PC-9 (cell line): ENCODE measurements at regions of chr2 and their contacts with region 1.

Region 1: GRCh38 chr2:178891265-178891958 is 84.2 kb upstream of the TTN start:
- DNase-seq: peak; percentile 61 to 67
- H3K4me3 ChIP-seq: no peak overlapping the region
- H3K27ac ChIP-seq: no peak overlapping the region
- H3K4me1 ChIP-seq: no peaks in the 10 kb centered on the region
- H3K27me3 ChIP-seq: no peaks in the 10 kb centered on the region
- CTCF ChIP-seq: peak; percentile 100

Region 2: GRCh38 chr2:178859730-178860129 is 31.7 kb before region 1 on chr2:
- CTCF ChIA-PET with region 1: no interaction called
- POLR2A ChIA-PET with region 1: no interaction called
- intact Hi-C with region 1: no loop called
- DNase-seq: no peak
- H3K4me3 ChIP-seq: no peak overlapping the region
- H3K27ac ChIP-seq: no peak overlapping the region
- H3K4me1 ChIP-seq: peaks cover 13% of the 10 kb centered on the region
- H3K27me3 ChIP-seq: no peaks in the 10 kb centered on the region
- CTCF ChIP-seq: no peak

Region 3: GRCh38 chr2:179106676-179107428 is 215.4 kb after region 1 on chr2:
- CTCF ChIA-PET with region 1: no interaction called
- POLR2A ChIA-PET with region 1: no interaction called
- intact Hi-C with region 1: loop called (anchors 1 kb)
- DNase-seq: peak; percentile 63 to 91
- H3K4me3 ChIP-seq: no peak overlapping the region
- H3K27ac ChIP-seq: no peak overlapping the region
- H3K4me1 ChIP-seq: peaks cover 18% of the 10 kb centered on the region
- H3K27me3 ChIP-seq: no peaks in the 10 kb centered on the region
- CTCF ChIP-seq: no peak

Region 4: GRCh38 chr2:179129574-179130238 is 238.3 kb after region 1 on chr2:
- CTCF ChIA-PET with region 1: interaction called, 5 read pairs
- POLR2A ChIA-PET with region 1: no interaction called
- intact Hi-C with region 1: loop called (anchors 5 kb)
- DNase-seq: no peak
- H3K4me3 ChIP-seq: no peak overlapping the region
- H3K27ac ChIP-seq: no peak overlapping the region
- H3K4me1 ChIP-seq: no peaks in the 10 kb centered on the region
- H3K27me3 ChIP-seq: no peaks in the 10 kb centered on the region
- CTCF ChIP-seq: peak; percentile 83